ENCODE measurements at regions of chr1 and their contacts with region 1.

Region 1: DNA sequence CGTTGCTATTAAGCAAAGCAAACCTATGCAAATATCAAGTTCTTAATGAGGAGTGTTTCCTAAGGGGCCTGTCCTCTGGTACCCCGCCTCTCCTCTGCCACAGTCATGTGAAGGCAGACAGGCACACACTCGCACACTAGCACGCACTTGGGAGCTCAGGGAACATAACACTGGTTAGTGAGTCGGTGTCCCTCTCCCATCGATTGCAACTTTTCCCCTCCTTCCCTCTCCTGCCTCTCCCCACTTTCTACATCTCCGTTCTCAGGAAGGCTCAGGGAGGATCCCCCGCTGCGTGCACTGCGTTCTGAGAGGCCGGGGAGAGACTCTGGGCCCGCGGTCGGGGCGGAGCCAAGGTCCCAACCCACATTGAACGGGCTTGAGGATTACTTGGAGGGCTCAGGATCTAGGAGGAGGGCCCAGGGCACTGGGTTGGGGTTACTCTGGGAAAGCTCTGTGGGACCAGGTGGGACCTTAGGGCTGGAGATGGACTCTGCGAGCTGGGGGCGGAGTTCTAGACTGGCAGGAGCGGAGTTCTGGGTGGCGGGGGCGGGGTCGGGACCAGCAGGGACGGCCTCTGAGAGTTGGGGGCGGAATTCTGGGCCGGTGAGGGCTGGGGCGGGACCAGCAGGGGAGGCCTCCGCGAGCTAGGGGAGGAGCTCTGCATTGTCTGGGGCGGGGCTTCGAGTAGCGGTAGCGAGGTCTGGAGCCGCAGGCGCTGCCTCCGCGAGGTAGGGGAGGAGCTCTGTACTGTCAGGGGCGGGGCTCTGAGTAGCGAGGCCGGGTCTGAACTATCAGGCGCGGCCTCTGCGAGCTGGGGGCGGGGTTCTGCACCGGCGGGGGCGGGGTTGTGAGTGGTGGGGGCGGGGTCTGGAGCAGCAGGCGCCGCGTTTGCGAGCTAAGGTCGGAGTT is 533 bp upstream of the LEPR start:
- DNase-seq: peak; percentile 93 to 99 (median 98)
- ATAC-seq: peak; percentile 97
- H3K4me3 ChIP-seq: peak overlapping the region; percentile 86
- H3K4me3 Mint-ChIP-seq: no peak overlapping the region
- H3K27ac ChIP-seq: peak overlapping the region; percentile 78
- H3K27ac Mint-ChIP-seq: peak overlapping the region in 7 of 9 donors; percentile 84 to 97 (median 95)
- H3K4me1 ChIP-seq: peaks cover 0 to 8% of the 10 kb centered on the region in 2 donors
- H3K4me1 Mint-ChIP-seq: peaks cover 0 to 31% (median 22%) of the 10 kb centered on the region in 7 donors
- H3K27me3 ChIP-seq: no peaks in the 10 kb centered on the region
- H3K27me3 Mint-ChIP-seq: peaks cover 0 to 12% (median 0%) of the 10 kb centered on the region in 5 donors

Region 2: GRCh38 chr1:63593303-63593885 is 1826.5 kb before region 1 on chr1 and contains the start of gene PGM1:
- CTCF ChIA-PET with region 1: no interaction called
- POLR2A ChIA-PET with region 1: no interaction called
- intact Hi-C with region 1: loop called (anchors 1 to 5 kb)
- DNase-seq: peak; percentile 63 to 81 (median 76)
- ATAC-seq: peak; percentile 91
- H3K4me3 ChIP-seq: peak within 1 kb of the TSS; percentile 71
- H3K4me3 Mint-ChIP-seq: peak within 1 kb of the TSS; percentile 96 to 99 (median 98)
- H3K27ac ChIP-seq: peak within 1 kb of the TSS; percentile 90
- H3K27ac Mint-ChIP-seq: peak within 1 kb of the TSS; percentile 95 to 99 (median 99)
- H3K4me1 ChIP-seq: peaks cover 0 to 7% of the 10 kb centered on the region in 2 donors
- H3K4me1 Mint-ChIP-seq: peaks cover 21 to 49% (median 40%) of the 10 kb centered on the region in 7 donors
- H3K27me3 ChIP-seq: no peaks in the 10 kb centered on the region
- H3K27me3 Mint-ChIP-seq: no peaks in the 10 kb centered on the region
- total RNA-seq, gene PGM1: 11.9 to 57.2 (median 16.1) TPM

Region 3: DNA sequence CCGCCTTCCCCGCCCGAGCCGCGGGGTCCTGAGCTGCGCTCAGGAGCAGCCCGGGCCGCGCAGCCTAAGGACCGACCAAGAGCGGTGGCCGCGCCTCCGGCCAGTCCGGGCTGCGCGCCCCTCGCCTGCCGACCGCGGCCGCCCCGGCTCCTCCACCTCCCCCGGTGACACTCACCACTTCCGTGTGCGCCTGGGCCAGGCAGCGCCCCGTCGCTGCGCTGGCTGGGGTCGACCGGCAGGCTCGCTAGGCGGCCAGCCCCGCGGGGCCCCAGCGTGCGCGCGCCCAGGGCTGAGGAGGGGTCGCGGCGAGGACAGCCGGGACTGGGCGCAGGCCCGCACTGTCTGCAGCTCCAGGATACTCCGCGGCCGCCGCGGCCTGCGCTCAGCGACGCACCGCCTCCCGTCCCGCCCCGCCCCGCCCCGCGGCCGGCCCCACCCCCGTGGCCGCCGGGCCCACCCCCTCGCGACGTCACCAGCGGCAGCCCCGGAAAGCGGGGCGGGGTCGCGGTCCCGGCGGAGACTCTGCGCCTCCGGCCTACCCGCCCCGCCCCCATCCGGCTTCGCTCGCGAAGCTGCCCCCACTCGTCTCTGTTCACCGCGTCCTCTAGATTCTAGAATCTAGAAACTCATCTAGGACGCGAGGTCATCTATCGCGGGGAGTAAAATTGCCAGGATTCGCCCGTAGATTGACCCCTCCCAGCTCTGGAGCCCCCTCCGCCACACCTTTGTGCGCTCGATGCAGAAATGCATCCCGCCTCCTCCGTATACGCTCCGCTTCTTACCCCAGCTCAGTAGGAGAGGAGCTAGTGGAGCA is 453.6 kb before region 1 on chr1 and contains the start of gene JAK1:
- CTCF ChIA-PET with region 1: interaction called, 3 read pairs
- POLR2A ChIA-PET with region 1: no interaction called
- intact Hi-C with region 1: loop called (anchors 1 kb)
- DNase-seq: peak; percentile 79 to 94 (median 91)
- ATAC-seq: peak; percentile 91
- H3K4me3 ChIP-seq: peak within 1 kb of the TSS; percentile 93
- H3K4me3 Mint-ChIP-seq: peak within 1 kb of the TSS; percentile 90 to 97 (median 94)
- H3K27ac ChIP-seq: peak within 1 kb of the TSS; percentile 97
- H3K27ac Mint-ChIP-seq: peak within 1 kb of the TSS; percentile 91 to 99 (median 97)
- H3K4me1 ChIP-seq: peaks cover 31 to 41% of the 10 kb centered on the region in 2 donors
- H3K4me1 Mint-ChIP-seq: peaks cover 37 to 55% (median 49%) of the 10 kb centered on the region in 7 donors
- H3K27me3 ChIP-seq: no peaks in the 10 kb centered on the region
- H3K27me3 Mint-ChIP-seq: peaks cover 0 to 3% (median 0%) of the 10 kb centered on the region in 5 donors
- total RNA-seq, gene JAK1: 210 to 365 (median 265) TPM

Region 4: GRCh38 chr1:65148548-65149350 is 271.2 kb before region 1 on chr1:
- CTCF ChIA-PET with region 1: no interaction called
- POLR2A ChIA-PET with region 1: no interaction called
- intact Hi-C with region 1: loop called in 1 of 2 experiments (anchors 2 kb)
- DNase-seq: peak in 6 of 9 donors; percentile 8 to 82 (median 18)
- ATAC-seq: peak; percentile 51
- H3K4me3 ChIP-seq: peak overlapping the region; percentile 45
- H3K4me3 Mint-ChIP-seq: peak overlapping the region; percentile 81 to 95 (median 86)
- H3K27ac ChIP-seq: no peak overlapping the region
- H3K27ac Mint-ChIP-seq: peak overlapping the region in 1 of 9 donors; percentile 81
- H3K4me1 ChIP-seq: peaks cover 0 to 6% of the 10 kb centered on the region in 2 donors
- H3K4me1 Mint-ChIP-seq: peaks cover 7 to 52% (median 14%) of the 10 kb centered on the region in 7 donors
- H3K27me3 ChIP-seq: peaks cover 0 to 6% of the 10 kb centered on the region in 2 donors
- H3K27me3 Mint-ChIP-seq: peaks cover 12 to 60% (median 53%) of the 10 kb centered on the region in 5 donors

Region 5: DNA sequence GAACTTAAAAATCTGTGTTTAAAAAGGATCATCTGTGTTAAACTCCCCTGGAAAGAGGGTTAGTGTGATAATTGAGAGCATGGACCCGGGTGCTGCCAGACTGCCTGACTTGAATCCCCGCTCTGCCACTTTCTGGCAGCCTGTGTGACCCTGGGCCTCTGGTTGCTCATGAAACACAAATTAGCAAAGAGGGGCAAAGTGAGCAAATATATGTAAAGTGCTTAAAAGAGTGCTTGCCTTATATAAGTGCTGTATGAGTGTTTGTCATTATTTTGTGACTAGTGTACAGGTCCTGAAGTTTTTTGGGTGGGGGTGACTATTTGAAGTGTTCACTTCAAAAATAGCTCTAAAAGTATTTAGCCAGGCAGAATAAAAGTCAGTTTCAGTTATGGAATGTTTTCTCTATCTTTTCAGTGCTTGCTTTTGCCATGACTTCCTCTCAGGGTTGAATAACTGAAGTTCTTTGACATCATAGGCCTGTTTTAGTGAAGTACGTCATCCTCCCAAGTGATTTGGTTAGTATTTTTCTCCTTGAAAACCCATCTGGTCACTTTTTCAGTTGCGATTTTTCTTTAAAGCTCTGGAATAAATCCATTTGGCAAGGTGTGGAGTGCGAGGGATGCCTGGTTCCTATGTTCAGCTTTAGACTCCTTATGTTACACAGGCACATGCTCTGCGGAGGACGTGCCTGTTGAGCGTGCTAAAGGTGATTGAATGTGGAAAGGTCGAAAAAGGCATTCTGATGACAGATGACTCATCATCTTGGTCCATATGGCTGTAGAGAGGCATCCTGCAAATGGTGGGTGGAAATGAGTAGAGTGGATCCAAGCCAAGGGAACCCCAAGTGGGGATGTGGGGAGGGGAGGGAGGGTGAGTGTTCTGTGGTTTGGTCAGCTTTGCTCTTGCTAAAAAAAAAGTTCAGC is 224.2 kb before region 1 on chr1:
- CTCF ChIA-PET with region 1: no interaction called
- POLR2A ChIA-PET with region 1: no interaction called
- intact Hi-C with region 1: no loop called
- DNase-seq: no peak
- ATAC-seq: no peak
- H3K4me3 ChIP-seq: no peak overlapping the region
- H3K4me3 Mint-ChIP-seq: no peak overlapping the region
- H3K27ac ChIP-seq: no peak overlapping the region
- H3K27ac Mint-ChIP-seq: peak overlapping the region in 1 of 9 donors; percentile 20
- H3K4me1 ChIP-seq: no peaks in the 10 kb centered on the region
- H3K4me1 Mint-ChIP-seq: peaks cover 0 to 17% (median 0%) of the 10 kb centered on the region in 7 donors
- H3K27me3 ChIP-seq: no peaks in the 10 kb centered on the region
- H3K27me3 Mint-ChIP-seq: peaks cover 0 to 11% (median 0%) of the 10 kb centered on the region in 5 donors

Region 6: DNA sequence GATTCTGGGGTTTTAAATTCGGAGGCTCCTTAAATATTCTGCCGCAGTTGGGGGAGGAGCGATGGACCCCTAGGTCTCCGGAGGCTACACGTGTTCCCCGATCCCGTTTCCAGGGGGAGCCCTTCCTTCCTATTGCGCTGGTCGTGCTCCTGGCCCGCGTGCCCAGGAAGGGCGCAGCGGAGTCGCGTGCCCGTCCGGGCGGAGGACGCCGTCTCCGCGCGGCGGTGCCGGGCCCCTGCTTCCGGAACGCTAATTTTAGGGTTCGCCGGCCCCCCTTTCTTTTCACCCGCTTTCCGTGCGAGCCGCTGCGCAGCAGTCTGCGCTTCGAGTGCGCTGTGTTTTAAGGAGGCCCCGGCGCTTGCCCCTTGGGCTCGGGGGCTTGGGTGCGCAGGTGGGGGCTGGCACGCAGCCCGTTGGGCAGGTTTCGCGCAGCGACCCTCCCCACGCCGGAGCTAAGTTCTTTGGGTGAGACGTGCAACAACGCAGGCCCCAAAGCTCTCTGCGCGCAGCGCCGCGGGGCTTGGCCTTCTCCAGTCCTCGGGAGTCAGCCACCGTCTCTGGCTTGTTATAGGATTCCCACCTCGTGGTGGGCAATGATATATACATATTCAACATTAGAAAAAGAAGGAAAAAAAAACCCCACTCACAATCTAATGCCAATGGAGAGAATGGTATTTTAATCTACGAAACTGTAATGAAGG is 154.1 kb before region 1 on chr1:
- CTCF ChIA-PET with region 1: no interaction called
- POLR2A ChIA-PET with region 1: interaction called, 12 read pairs
- intact Hi-C with region 1: loop called in 1 of 2 experiments (anchors 1 kb)
- DNase-seq: peak; percentile 21 to 60 (median 51)
- ATAC-seq: peak; percentile 76
- H3K4me3 ChIP-seq: peak overlapping the region; percentile 55
- H3K4me3 Mint-ChIP-seq: peak overlapping the region; percentile 51 to 89 (median 82)
- H3K27ac ChIP-seq: peak overlapping the region; percentile 24
- H3K27ac Mint-ChIP-seq: peak overlapping the region in 7 of 9 donors; percentile 49 to 79 (median 72)
- H3K4me1 ChIP-seq: peaks cover 11 to 16% of the 10 kb centered on the region in 2 donors
- H3K4me1 Mint-ChIP-seq: peaks cover 13 to 30% (median 19%) of the 10 kb centered on the region in 7 donors
- H3K27me3 ChIP-seq: no peaks in the 10 kb centered on the region
- H3K27me3 Mint-ChIP-seq: peaks cover 13 to 47% (median 24%) of the 10 kb centered on the region in 5 donors

Region 7: GRCh38 chr1:65431111-65431705 is 11.3 kb after region 1 on chr1:
- CTCF ChIA-PET with region 1: interaction called, 4 read pairs
- POLR2A ChIA-PET with region 1: interaction called, 3 read pairs
- intact Hi-C with region 1: loop called in 1 of 2 experiments (anchors 1 kb)
- DNase-seq: peak in 5 of 9 donors; percentile 32 to 43 (median 33)
- ATAC-seq: peak; percentile 67
- H3K4me3 ChIP-seq: no peak overlapping the region
- H3K4me3 Mint-ChIP-seq: no peak overlapping the region
- H3K27ac ChIP-seq: no peak overlapping the region
- H3K27ac Mint-ChIP-seq: no peak overlapping the region
- H3K4me1 ChIP-seq: no peaks in the 10 kb centered on the region
- H3K4me1 Mint-ChIP-seq: peaks cover 0 to 28% (median 3%) of the 10 kb centered on the region in 7 donors
- H3K27me3 ChIP-seq: no peaks in the 10 kb centered on the region
- H3K27me3 Mint-ChIP-seq: no peaks in the 10 kb centered on the region

Region 8: DNA sequence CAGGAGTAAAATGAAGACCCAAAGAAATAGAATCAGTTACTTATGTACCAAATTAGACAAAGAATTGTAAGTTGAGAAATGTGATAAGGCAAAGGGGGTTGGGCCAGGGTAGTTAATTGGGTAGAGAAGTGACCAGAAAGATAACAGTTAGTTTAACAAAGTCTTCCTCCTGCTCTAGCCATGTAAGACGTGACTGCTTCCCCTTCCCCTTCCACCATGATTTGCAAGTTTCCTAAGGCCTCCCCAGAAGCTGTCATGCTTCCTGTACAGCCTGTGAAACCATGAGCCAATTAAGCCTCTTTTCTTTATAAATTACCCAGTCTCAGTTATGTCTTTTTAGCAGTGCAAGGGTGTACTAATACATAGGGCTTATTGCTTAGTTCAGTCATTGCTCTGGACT is 230.7 kb after region 1 on chr1:
- CTCF ChIA-PET with region 1: no interaction called
- POLR2A ChIA-PET with region 1: no interaction called
- intact Hi-C with region 1: no loop called
- DNase-seq: no peak
- ATAC-seq: no peak
- H3K4me3 ChIP-seq: no peak overlapping the region
- H3K4me3 Mint-ChIP-seq: no peak overlapping the region
- H3K27ac ChIP-seq: no peak overlapping the region
- H3K27ac Mint-ChIP-seq: no peak overlapping the region
- H3K4me1 ChIP-seq: no peaks in the 10 kb centered on the region
- H3K4me1 Mint-ChIP-seq: no peaks in the 10 kb centered on the region
- H3K27me3 ChIP-seq: no peaks in the 10 kb centered on the region
- H3K27me3 Mint-ChIP-seq: peaks cover 6 to 41% (median 17%) of the 10 kb centered on the region in 5 donors

Region 9: GRCh38 chr1:66924756-66925557 is 1505.0 kb after region 1 on chr1 and contains the starts of genes DNAI4 and MIER1:
- CTCF ChIA-PET with region 1: no interaction called
- POLR2A ChIA-PET with region 1: no interaction called
- intact Hi-C with region 1: loop called (anchors 2 kb)
- DNase-seq: peak; percentile 91 to 98 (median 96)
- ATAC-seq: peak; percentile 97
- H3K4me3 ChIP-seq: peak within 1 kb of the TSS; percentile 83
- H3K4me3 Mint-ChIP-seq: peak within 1 kb of the TSS; percentile 92 to 98 (median 96)
- H3K27ac ChIP-seq: peak within 1 kb of the TSS; percentile 95
- H3K27ac Mint-ChIP-seq: peak within 1 kb of the TSS; percentile 95 to 97 (median 97)
- H3K4me1 ChIP-seq: peaks cover 24 to 37% of the 10 kb centered on the region in 2 donors
- H3K4me1 Mint-ChIP-seq: peaks cover 18 to 75% (median 60%) of the 10 kb centered on the region in 7 donors
- H3K27me3 ChIP-seq: no peaks in the 10 kb centered on the region
- H3K27me3 Mint-ChIP-seq: no peaks in the 10 kb centered on the region
- total RNA-seq, gene DNAI4: 1.3 to 10.7 (median 9.7) TPM
- total RNA-seq, gene MIER1: 51.5 to 73.6 (median 70.9) TPM

Measured in naive thymus-derived CD4-positive, alpha-beta T cell (primary cell).